ENCODE measurements at regions of chr11 and their contacts with region 1.

Region 1: GRCh38 chr11:73661035-73661628 is 14.8 kb downstream of the PLEKHB1 start:
- DNase-seq: peak; percentile 81 to 95 (median 94)
- ATAC-seq: peak; percentile 98
- H3K4me3 ChIP-seq: peak overlapping the region; percentile 20; the same call in 1 of the 2 replicates
- H3K27ac ChIP-seq: no peak overlapping the region
- H3K4me1 ChIP-seq: peaks cover 6 to 12% of the 10 kb centered on the region in 2 experiments; a peak in 4 of 5 replicates
- H3K27me3 ChIP-seq: peaks cover 0 to 4% of the 10 kb centered on the region in 2 experiments; a peak in 1 of 5 replicates
- CTCF ChIP-seq: peak; percentile 96 to 98 (median 97)
- EP300 ChIP-seq: 0 out of 2 replicates have a peak, but pooled peaks have one; percentile 13
- POLR2A ChIP-seq: no peak
- RAD21 ChIP-seq: peak; percentile 97 to 99

Region 2: DNA sequence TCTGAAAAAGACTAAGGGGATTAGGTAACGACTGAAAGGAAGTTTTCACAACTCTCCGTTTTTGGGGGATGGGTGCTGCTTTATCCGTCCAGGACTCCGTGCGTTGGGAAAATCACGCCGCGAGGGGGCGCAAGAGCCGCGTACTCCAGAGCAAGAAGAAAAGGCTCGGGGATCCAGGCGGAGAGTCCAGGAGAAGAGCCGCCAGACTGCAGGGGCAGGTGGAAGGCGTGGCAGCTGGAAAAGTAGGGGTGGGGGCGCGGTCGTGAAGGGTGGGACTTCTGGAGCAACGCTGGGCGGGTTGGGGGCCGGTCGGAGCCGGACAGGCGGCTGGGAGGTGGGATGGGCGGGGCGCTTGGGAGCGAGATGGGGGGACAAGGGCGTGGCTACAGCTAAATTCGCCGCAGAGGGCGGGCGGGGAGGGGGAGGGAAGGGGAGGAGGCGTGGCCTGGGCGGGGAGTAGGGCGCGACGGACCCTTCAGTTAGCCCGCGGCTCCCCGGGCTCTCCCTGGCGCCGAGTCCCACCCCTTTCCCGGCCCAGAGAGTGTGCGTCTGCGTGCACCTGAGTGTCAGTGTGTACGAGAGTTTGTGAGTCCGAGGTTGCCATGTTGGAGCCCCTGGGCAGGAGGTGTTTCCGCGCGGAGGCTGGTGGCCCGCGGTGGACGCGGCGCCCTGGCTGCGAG is 353.7 kb before region 1 on chr11:
- CTCF ChIA-PET with region 1: interaction called, 3 read pairs
- POLR2A ChIA-PET with region 1: no interaction called
- in situ Hi-C with region 1: no loop called
- intact Hi-C with region 1: loop called (anchors 1 kb)
- DNase-seq: peak; percentile 92 to 94 (median 94)
- ATAC-seq: peak; percentile 93
- H3K4me3 ChIP-seq: peak overlapping the region; percentile 49
- H3K27ac ChIP-seq: peak overlapping the region; percentile 32; the same call in 1 of the 3 replicates
- H3K4me1 ChIP-seq: peaks cover 0 to 22% of the 10 kb centered on the region in 2 experiments; a peak in 4 of 5 replicates
- H3K27me3 ChIP-seq: peaks cover 6 to 43% of the 10 kb centered on the region in 2 experiments; a peak in 3 of 5 replicates
- CTCF ChIP-seq: peak; percentile 89 to 92 (median 91)
- EP300 ChIP-seq: peak; percentile 29; the same call in 1 of the 2 replicates
- POLR2A ChIP-seq: no peak
- RAD21 ChIP-seq: peak; percentile 83 to 91

Region 3: DNA sequence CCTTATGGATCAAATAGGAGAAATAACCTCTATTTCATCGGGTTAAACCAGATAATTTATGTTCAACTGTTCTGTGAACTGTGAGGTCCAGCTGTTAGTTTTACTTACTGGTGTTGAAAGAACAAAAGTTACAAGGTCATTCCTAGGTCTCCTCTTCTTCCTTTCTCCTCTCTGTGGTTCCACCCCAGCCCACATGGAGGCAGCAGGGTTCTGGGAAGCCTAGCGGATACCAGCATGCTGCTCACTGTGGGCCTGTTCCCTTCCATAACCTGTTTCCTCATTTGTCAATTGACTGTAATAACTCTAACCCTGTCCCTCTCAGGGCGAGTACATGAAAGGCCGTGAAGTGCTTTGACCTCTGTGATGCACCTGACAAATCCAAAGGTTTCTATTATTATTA is 257.1 kb before region 1 on chr11:
- CTCF ChIA-PET with region 1: interaction called, 37 read pairs
- POLR2A ChIA-PET with region 1: interaction called, 3 read pairs
- in situ Hi-C with region 1: loop called (anchors 5 kb)
- intact Hi-C with region 1: loop called (anchors 1 kb)
- DNase-seq: peak; percentile 57 to 76 (median 66)
- ATAC-seq: peak; percentile 94
- H3K4me3 ChIP-seq: no peak overlapping the region
- H3K27ac ChIP-seq: no peak overlapping the region
- H3K4me1 ChIP-seq: peaks cover 5 to 9% of the 10 kb centered on the region in 2 experiments; a peak in 4 of 5 replicates
- H3K27me3 ChIP-seq: no peaks in the 10 kb centered on the region
- CTCF ChIP-seq: peak; percentile 80 to 83 (median 81)
- EP300 ChIP-seq: no peak
- POLR2A ChIP-seq: no peak
- RAD21 ChIP-seq: peak; percentile 59 to 83

Region 4: DNA sequence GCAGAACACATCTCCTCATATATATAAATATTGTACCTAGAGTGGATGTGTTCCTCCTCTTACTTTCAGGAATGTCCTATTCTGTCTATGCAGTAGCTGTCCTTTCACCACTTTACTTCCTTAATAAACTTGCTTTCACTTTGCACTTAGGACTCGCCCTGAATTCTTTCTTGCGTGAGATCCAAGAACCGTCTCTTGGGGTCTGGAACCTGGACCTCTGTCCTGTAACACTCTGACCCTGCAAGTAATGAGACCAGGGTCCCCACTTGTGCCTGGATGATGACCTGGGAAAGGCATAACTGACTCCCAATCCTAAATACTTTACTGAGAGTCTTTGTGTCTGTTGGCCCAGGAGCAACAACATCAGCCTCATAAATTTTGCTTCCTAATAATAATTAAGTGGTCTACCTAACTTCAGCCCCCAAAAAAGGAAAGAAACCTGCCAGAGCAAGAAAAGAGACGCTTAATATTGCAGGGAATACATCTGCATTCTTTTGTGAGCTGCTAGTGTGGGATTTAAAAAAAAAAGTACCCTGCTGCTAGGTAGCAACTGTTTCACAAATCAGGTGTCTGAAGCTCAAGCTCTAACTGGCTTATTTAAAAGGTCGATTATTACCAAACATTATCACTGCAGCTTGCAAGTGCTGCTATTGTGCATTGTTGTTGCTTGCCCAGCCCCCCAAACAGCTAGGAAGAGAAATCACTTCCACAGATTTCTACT is 132.5 kb before region 1 on chr11:
- CTCF ChIA-PET with region 1: no interaction called
- POLR2A ChIA-PET with region 1: interaction called, 3 read pairs
- in situ Hi-C with region 1: no loop called
- intact Hi-C with region 1: loop called (anchors 5 kb)
- DNase-seq: no peak
- ATAC-seq: no peak
- H3K4me3 ChIP-seq: no peak overlapping the region
- H3K27ac ChIP-seq: no peak overlapping the region
- H3K4me1 ChIP-seq: no peaks in the 10 kb centered on the region
- H3K27me3 ChIP-seq: no peaks in the 10 kb centered on the region; a peak in 1 of 5 replicates
- CTCF ChIP-seq: no peak
- EP300 ChIP-seq: no peak
- POLR2A ChIP-seq: no peak
- RAD21 ChIP-seq: no peak

Region 5: GRCh38 chr11:73578592-73579185 is 82.4 kb before region 1 on chr11:
- CTCF ChIA-PET with region 1: no interaction called
- POLR2A ChIA-PET with region 1: no interaction called
- in situ Hi-C with region 1: no loop called
- intact Hi-C with region 1: no loop called
- DNase-seq: no peak
- ATAC-seq: no peak
- H3K4me3 ChIP-seq: no peak overlapping the region
- H3K27ac ChIP-seq: no peak overlapping the region
- H3K4me1 ChIP-seq: no peaks in the 10 kb centered on the region
- H3K27me3 ChIP-seq: no peaks in the 10 kb centered on the region
- CTCF ChIP-seq: no peak
- EP300 ChIP-seq: no peak
- POLR2A ChIP-seq: no peak
- RAD21 ChIP-seq: no peak

Region 6: DNA sequence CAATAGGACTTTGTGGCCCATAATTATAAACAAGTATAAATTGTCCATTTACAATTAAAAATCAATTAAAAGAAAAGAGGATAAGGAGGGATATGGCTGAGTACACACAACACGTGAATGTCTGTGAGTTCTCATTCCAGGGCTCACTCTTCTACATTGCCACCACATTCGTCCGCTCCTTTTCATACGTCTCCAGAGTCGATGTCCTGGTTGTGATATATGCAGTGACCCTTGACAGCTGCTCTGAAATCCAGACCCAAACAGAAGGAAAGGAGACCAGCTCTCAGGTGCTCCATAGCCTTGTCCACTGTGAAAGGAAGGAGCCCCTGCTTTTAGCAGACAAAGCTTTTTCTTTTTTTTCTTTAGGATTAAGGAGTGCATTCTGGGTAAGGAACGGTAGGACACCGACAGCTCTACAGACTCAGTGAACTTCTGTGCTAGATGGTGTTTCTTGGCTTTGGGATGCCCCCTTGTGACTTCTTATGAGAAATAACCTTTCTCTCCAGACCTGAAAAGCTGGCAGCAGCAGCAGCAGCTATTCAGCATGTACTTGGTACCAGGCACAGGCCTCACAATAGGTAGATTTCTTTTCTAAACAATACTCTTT is 270.0 kb after region 1 on chr11:
- CTCF ChIA-PET with region 1: no interaction called
- POLR2A ChIA-PET with region 1: no interaction called
- in situ Hi-C with region 1: no loop called
- intact Hi-C with region 1: loop called (anchors 1 kb)
- DNase-seq: peak; percentile 41 to 75 (median 58)
- ATAC-seq: peak; percentile 100
- H3K4me3 ChIP-seq: no peak overlapping the region
- H3K27ac ChIP-seq: no peak overlapping the region
- H3K4me1 ChIP-seq: no peaks in the 10 kb centered on the region
- H3K27me3 ChIP-seq: no peaks in the 10 kb centered on the region
- CTCF ChIP-seq: peak; percentile 69 to 82 (median 80)
- EP300 ChIP-seq: no peak
- POLR2A ChIP-seq: no peak
- RAD21 ChIP-seq: peak; percentile 51 to 84; a peak in 3 of 4 replicates

Measured in K562 (cell line).